ENCODE measurements at regions of chr2 and their contacts with region 1.

Region 1: GRCh38 chr2:121095257-121096080 is 189.5 kb downstream of the TFCP2L1 start:
- DNase-seq: peak; percentile 68 to 87 (median 84)
- ATAC-seq: peak; percentile 42 to 64
- H3K4me3 ChIP-seq: no peak overlapping the region
- H3K27ac ChIP-seq: no peak overlapping the region
- H3K4me1 ChIP-seq: peaks cover 2% of the 10 kb centered on the region
- H3K27me3 ChIP-seq: no peaks in the 10 kb centered on the region

Region 2: GRCh38 chr2:121356058-121356640 is 260.7 kb after region 1 on chr2:
- intact Hi-C with region 1: loop called (anchors 5 to 10 kb)
- DNase-seq: no peak
- ATAC-seq: peak in 1 of 2 donors; percentile 65
- H3K4me3 ChIP-seq: no peak overlapping the region
- H3K27ac ChIP-seq: no peak overlapping the region
- H3K4me1 ChIP-seq: no peaks in the 10 kb centered on the region
- H3K27me3 ChIP-seq: no peaks in the 10 kb centered on the region

Measured in right cardiac atrium (tissue), 5 donors.